Activated CD8-positive, alpha-beta memory T cell treated with anti-CD3 and anti-CD28 coated beads, Interleukin-2, amount 10 ng/mL, durations not matched to agents 7 days and 5 days (primary cell): ENCODE measurements at regions of chr1 and their contacts with region 1.

Region 1: DNA sequence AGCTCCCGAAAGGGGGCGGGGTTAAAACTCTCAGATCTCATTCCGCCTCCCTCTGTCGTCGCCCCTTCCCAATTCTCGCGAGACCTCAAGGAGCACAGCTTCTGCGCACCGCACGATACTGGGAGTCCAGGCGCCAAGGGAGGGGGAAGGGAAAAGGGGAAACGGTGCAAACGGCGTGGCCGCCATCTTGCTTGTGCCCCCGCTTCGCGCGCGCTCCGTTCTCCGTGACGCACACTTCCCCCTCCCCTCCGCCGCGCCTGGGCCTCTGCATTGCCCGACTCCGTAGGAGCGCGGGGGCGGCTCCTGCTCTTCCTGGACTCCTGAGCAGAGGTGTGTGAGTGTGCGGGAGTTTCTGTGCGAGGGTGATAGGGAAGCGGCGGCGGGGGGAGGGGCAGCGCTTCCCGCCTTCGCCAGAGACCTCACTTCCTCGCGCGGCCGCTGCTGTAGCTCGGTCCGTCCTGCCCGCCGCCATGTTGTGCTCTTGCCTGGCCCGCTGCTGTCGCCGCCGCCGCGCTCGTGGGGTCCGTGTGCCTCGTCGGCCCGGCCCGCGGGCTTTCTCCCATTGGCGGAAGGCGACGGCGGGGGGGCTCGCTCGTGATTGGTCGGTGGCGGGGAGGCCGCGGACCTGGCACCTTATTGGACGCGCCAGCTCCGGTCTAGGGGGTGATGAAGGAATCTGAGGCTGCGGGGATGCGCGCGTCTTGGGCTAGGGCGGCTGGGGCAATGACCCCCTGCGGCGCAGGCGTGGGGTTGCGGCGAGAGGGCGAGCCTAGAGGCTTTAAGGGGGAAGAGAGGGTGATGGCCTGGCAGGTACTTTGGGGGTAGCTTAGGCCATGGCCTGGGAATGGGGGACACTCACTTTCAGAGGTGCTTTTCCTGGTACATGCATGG is at the start of gene NFYC:
- DNase-seq: peak; percentile 99
- ATAC-seq: peak; percentile 88
- H3K4me3 Mint-ChIP-seq: peak within 1 kb of the TSS; percentile 90
- H3K27ac Mint-ChIP-seq: peak within 1 kb of the TSS; percentile 90
- H3K4me1 Mint-ChIP-seq: peaks cover 56% of the 10 kb centered on the region
- H3K27me3 Mint-ChIP-seq: no peaks in the 10 kb centered on the region
- total RNA-seq, gene NFYC: 71.1 to 91.2 TPM

Region 2: DNA sequence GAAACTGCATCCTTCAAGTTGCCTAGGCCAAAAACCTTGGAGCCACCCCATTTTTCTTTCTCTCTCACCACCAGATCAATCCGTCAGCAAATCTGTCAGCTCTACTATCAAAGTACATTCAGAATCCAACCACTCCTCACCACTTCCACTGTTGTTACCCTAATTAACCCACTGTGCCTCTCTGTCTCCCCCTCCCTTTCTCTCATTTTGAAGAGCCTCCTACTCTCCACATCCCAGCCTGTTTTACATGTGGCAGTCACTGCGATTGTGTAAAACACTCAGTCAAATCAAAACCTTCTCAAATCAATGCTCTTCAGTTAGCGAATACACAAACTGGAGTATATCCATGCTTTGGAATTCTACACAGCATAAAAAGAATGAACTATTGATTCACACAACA is 127.3 kb before region 1 on chr1:
- CTCF ChIA-PET with region 1: no interaction called
- DNase-seq: no peak
- ATAC-seq: no peak
- H3K4me3 Mint-ChIP-seq: no peak overlapping the region
- H3K27ac Mint-ChIP-seq: no peak overlapping the region
- H3K4me1 Mint-ChIP-seq: peaks cover 6% of the 10 kb centered on the region
- H3K27me3 Mint-ChIP-seq: peaks cover 6% of the 10 kb centered on the region

Region 3: DNA sequence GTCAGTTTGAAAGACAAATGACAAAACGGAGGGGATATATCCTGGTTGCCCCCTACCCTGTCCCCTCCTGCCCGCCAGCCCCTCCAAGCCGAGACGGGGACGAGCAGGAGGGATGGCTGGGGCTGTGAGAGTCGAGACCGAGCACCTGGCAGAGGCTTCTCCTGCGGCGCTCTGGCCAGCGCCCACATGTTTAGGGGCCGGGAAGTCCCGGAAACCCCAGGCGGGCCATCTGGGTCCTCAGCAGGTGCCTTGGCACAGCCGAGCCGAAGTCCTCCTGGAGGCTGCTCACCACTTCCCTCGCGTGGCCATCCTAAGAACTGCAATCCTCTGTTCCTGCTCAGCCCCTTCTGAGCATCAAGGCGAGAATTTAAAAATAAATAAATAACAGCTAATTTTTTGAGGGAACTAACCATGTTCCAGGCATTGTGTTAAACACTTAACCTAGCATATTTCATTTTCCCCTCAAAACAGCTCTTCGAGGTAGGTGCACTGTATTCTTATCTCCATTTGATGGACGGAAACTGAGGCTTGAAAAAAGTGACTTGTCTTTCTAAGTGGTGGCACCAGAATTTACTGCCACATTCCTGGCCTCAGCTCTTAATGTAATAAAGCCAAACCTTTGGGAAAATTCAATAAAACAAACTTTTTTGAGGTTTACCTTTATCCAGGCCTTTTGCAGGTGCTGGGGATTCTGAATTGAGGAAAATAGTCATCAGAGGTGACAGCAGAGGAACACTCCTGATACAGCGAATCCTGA is 22.8 kb before region 1 on chr1:
- CTCF ChIA-PET with region 1: interaction called, 27 read pairs
- DNase-seq: peak; percentile 89
- ATAC-seq: peak; percentile 50
- H3K4me3 Mint-ChIP-seq: no peak overlapping the region
- H3K27ac Mint-ChIP-seq: peak overlapping the region; percentile 43
- H3K4me1 Mint-ChIP-seq: peaks cover 13% of the 10 kb centered on the region
- H3K27me3 Mint-ChIP-seq: no peaks in the 10 kb centered on the region

Region 4: DNA sequence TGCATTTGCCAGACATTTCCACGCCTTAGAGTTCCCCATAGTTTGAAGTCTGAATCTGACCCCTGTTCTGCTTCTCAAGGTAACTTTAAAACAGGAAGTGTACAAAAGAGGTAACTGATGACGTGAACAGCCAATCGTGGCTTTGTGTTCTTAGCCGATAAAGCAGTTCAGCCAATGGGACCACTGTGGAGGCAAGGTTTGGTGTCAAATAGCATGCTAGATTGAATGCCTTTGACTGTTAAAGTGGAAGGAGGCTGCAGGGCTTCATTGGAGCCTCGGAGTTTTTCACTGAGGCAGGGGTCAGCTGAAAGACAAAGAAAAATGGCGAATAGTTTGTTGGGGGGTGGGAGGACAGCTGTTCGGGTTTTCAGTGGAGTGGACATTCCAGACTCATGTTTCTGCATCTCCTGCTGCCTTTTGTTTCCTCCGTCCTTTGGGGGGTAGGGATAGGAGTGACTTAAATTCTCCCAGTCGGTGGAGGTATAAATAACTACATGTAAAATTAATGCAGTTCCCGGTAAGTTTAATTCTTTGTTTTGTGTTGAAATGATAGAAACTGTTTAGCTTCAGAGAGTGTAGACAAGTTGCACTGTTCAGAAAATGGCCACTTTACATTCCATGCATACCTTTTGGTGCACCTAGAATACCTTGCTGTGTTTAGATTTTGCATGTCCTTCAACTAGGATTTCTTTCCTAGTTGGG is 17.5 kb after region 1 on chr1:
- CTCF ChIA-PET with region 1: interaction called, 10 read pairs
- DNase-seq: peak; percentile 92
- ATAC-seq: peak; percentile 97
- H3K4me3 Mint-ChIP-seq: peak overlapping the region; percentile 94
- H3K27ac Mint-ChIP-seq: peak overlapping the region; percentile 97
- H3K4me1 Mint-ChIP-seq: peaks cover 60% of the 10 kb centered on the region
- H3K27me3 Mint-ChIP-seq: no peaks in the 10 kb centered on the region